MCF 10A (cell line): ENCODE measurements at regions of chr4 and their contacts with region 1.

Region 1: DNA sequence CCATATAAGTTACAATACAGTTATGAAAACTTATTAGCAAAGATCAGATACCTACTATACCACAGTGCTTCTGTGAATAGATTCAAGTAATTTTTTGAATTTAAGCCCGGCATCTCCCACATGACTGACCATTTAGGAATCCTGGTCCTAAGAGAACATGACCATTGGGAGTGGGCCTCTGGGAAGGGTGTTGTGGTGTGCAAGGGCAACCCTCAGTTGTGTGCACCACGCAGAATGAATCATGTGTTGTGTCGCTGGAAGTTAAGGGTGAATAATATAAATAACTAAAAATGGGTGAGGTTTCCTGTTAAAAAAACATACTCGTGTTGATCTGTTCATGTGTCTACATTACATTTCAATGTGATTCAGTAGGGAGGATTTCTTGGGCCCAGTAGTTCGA is 15.5 kb downstream of the CPE start:
- DNase-seq: peak; percentile 59
- H3K4me3 Mint-ChIP-seq: no peak overlapping the region
- H3K27ac Mint-ChIP-seq: peak overlapping the region; percentile 95
- H3K4me1 Mint-ChIP-seq: peaks cover 12% of the 10 kb centered on the region
- H3K27me3 Mint-ChIP-seq: no peaks in the 10 kb centered on the region
- CTCF ChIP-seq: no peak

Region 2: DNA sequence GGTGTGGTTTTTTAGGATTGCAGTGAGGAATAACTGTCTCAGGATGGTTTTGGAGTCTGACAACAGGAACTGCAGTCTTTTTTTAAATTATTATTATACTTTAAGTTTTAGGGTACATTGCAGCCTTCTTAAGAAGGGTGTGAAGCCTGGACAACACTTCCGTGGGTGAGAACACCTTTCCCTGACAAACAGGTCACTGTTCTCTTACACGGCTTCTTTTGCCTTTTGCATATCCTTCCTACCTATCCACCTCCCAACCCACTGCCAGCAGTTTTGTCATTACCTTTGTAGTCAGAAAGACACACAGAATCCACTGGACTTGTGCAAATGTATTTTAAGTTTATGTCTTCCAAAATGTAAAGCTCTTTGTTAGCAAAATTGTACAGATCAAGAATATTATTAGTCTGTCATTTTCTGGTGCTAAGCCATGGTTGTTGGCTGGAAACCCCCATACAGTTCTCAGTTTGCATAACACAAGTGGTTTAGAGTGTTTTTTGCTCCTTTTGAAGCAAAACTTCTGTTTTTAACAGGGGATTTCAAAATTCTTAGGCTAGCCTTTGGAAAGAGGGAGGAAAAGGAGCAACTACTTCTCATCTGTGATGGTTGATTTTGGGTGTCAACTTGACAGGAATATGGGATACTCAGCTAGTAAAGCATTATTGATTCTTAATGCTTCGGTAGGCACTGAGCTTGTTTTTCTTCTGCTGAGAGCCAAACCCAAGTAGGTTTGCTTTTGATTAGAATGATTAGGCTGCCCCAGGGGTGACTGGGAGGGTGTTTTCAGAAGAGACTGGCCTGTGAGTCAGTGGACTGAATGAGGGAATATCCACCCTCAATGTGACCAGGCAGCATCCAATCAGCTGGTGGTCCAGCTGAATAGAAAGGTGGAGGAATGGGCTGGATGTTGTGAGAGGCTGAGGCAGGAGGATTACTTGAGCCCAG is 216.3 kb before region 1 on chr4:
- CTCF ChIA-PET with region 1: no interaction called
- POLR2A ChIA-PET with region 1: no interaction called
- intact Hi-C with region 1: no loop called
- DNase-seq: no peak
- H3K4me3 Mint-ChIP-seq: no peak overlapping the region
- H3K27ac Mint-ChIP-seq: no peak overlapping the region
- H3K4me1 Mint-ChIP-seq: no peaks in the 10 kb centered on the region
- H3K27me3 Mint-ChIP-seq: no peaks in the 10 kb centered on the region
- CTCF ChIP-seq: no peak

Region 3: DNA sequence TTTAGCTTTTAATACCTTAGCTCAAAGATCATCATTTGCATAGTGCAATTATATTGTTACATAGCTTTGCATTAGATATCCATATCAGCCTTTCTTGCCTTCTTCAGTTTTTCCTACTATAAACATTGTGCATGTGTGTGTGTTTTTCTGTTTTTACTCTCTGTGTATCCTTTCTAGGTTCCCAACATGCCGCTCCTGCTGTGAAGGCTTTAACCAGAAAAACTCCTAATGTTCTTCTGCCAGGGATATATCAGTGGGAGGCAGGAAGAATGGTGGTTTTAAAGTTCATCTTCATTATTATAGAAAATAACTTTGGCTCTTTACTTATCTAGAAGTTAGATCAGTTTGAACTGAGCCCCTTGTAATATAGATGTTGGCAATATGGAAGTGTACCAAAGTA is 45.7 kb after region 1 on chr4:
- CTCF ChIA-PET with region 1: no interaction called
- POLR2A ChIA-PET with region 1: no interaction called
- intact Hi-C with region 1: loop called (anchors 5 kb)
- DNase-seq: peak; percentile 7
- H3K4me3 Mint-ChIP-seq: no peak overlapping the region
- H3K27ac Mint-ChIP-seq: no peak overlapping the region
- H3K4me1 Mint-ChIP-seq: peaks cover 14% of the 10 kb centered on the region
- H3K27me3 Mint-ChIP-seq: no peaks in the 10 kb centered on the region
- CTCF ChIP-seq: no peak

Region 4: DNA sequence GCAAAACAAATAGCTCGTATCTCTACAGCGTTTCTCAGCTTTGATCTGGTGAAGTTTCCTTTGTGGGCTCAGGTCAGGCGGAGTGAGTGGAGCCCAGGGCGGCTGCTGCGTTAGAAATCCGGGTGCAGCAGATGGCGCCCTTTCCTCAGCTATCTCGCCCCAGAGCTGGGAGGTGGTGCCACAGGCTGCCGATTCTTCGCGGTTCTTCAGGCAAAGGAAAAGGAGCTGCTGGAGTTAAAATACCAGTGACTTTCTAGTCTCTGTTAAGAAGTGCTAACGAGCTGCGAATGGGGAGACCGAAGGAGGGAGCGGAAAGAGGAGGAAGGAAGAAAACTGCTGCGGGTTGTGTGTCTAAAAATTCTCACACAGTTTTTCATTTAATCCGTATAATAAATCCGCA is 99.1 kb after region 1 on chr4:
- CTCF ChIA-PET with region 1: no interaction called
- POLR2A ChIA-PET with region 1: no interaction called
- intact Hi-C with region 1: no loop called
- DNase-seq: peak; percentile 74
- H3K4me3 Mint-ChIP-seq: no peak overlapping the region
- H3K27ac Mint-ChIP-seq: no peak overlapping the region
- H3K4me1 Mint-ChIP-seq: peaks cover 12% of the 10 kb centered on the region
- H3K27me3 Mint-ChIP-seq: no peaks in the 10 kb centered on the region
- CTCF ChIP-seq: peak; percentile 72